PC-9 (cell line): ENCODE measurements at regions of chr6 and their contacts with region 1.

Region 1: GRCh38 chr6:43769526-43770416 is at the start of gene VEGFA:
- DNase-seq: peak; percentile 76 to 85
- H3K4me3 ChIP-seq: peak within 1 kb of the TSS; percentile 90
- H3K27ac ChIP-seq: peak within 1 kb of the TSS; percentile 94
- H3K4me1 ChIP-seq: peaks cover 12% of the 10 kb centered on the region
- H3K27me3 ChIP-seq: no peaks in the 10 kb centered on the region
- CTCF ChIP-seq: peak; percentile 99
- total RNA-seq, gene VEGFA: 112 and 117 TPM in 2 replicates

Region 2: GRCh38 chr6:42260972-42261371 is 1508.8 kb before region 1 on chr6:
- CTCF ChIA-PET with region 1: no interaction called
- POLR2A ChIA-PET with region 1: no interaction called
- intact Hi-C with region 1: no loop called
- DNase-seq: no peak
- H3K4me3 ChIP-seq: no peak overlapping the region
- H3K27ac ChIP-seq: no peak overlapping the region
- H3K4me1 ChIP-seq: no peaks in the 10 kb centered on the region
- H3K27me3 ChIP-seq: no peaks in the 10 kb centered on the region
- CTCF ChIP-seq: peak; percentile 65

Region 3: DNA sequence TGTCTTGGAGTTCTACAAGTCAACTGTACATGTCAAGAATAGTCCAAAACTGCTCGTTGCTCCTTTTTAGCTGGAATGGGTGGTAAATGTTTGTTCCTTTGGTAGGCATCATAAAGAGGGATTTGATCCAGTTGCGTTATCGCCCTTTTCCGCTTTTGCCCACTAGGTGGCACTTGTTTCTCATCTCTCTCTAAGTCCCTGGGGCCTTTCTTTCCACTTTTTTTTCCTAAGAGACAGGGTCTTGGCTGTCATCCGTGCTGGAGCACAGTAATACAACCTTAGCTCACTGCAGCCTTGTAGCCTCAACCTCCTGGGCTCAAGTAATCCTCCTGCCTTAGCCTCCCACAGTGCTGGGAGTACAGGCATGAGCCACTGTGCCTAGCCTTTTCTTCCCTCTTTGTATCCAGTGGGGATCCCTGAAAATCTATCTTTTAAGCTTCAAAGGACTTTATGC is 161.4 kb before region 1 on chr6:
- CTCF ChIA-PET with region 1: no interaction called
- POLR2A ChIA-PET with region 1: no interaction called
- intact Hi-C with region 1: loop called (anchors 2 kb)
- DNase-seq: peak; percentile 60 to 63
- H3K4me3 ChIP-seq: no peak overlapping the region
- H3K27ac ChIP-seq: no peak overlapping the region
- H3K4me1 ChIP-seq: no peaks in the 10 kb centered on the region
- H3K27me3 ChIP-seq: no peaks in the 10 kb centered on the region
- CTCF ChIP-seq: peak; percentile 85

Region 4: GRCh38 chr6:43629505-43630300 is 140.1 kb before region 1 on chr6:
- CTCF ChIA-PET with region 1: interaction called, 5 read pairs
- POLR2A ChIA-PET with region 1: interaction called, 8 read pairs
- intact Hi-C with region 1: loop called (anchors 2 kb)
- DNase-seq: peak; percentile 96 to 97
- H3K4me3 ChIP-seq: peak overlapping the region; percentile 93
- H3K27ac ChIP-seq: peak overlapping the region; percentile 97
- H3K4me1 ChIP-seq: peaks cover 34% of the 10 kb centered on the region
- H3K27me3 ChIP-seq: no peaks in the 10 kb centered on the region
- CTCF ChIP-seq: no peak

Region 5: DNA sequence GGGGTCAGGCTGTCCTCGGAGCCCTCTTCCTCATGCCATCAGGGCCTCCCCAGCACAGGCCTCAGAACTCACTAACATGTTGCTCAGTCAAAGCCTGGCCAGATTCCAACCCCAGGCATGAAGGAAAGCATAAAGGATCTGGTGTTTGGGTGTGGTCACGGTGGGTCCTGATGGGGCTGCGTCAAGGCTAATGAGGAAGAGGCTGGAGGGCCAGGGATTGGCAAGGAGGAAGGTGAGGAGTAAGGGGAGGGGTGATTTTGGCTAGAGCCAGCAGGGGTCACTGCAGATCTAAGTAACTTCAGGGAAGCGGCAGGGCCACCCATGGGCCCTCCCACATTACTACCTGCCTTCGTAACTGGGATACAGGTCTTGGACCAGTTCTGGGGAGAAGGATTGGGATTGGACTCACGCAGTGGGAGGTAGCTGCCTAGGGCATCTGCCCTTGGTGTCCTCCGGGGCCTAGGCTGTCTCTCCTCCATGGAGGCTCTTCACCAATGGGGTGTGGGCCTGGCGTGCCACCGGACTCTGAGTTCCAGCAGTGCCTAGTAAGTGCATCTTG is 46.0 kb before region 1 on chr6:
- CTCF ChIA-PET with region 1: interaction called, 8 read pairs
- POLR2A ChIA-PET with region 1: interaction called, 7 read pairs
- intact Hi-C with region 1: loop called (anchors 1 kb)
- DNase-seq: peak; percentile 69 to 74
- H3K4me3 ChIP-seq: no peak overlapping the region
- H3K27ac ChIP-seq: no peak overlapping the region
- H3K4me1 ChIP-seq: peaks cover 28% of the 10 kb centered on the region
- H3K27me3 ChIP-seq: no peaks in the 10 kb centered on the region
- CTCF ChIP-seq: peak; percentile 83

Region 6: GRCh38 chr6:43851204-43851865 is 81.6 kb after region 1 on chr6:
- CTCF ChIA-PET with region 1: interaction called, 3 read pairs
- POLR2A ChIA-PET with region 1: no interaction called
- intact Hi-C with region 1: loop called (anchors 5 kb)
- DNase-seq: peak; percentile 56 to 65
- H3K4me3 ChIP-seq: no peak overlapping the region
- H3K27ac ChIP-seq: no peak overlapping the region
- H3K4me1 ChIP-seq: peaks cover 44% of the 10 kb centered on the region
- H3K27me3 ChIP-seq: no peaks in the 10 kb centered on the region
- CTCF ChIP-seq: no peak

Region 7: GRCh38 chr6:43951063-43951755 is 181.4 kb after region 1 on chr6:
- CTCF ChIA-PET with region 1: interaction called, 4 read pairs
- POLR2A ChIA-PET with region 1: no interaction called
- intact Hi-C with region 1: loop called (anchors 2 kb)
- DNase-seq: peak; percentile 44 to 62
- H3K4me3 ChIP-seq: no peak overlapping the region
- H3K27ac ChIP-seq: no peak overlapping the region
- H3K4me1 ChIP-seq: peaks cover 21% of the 10 kb centered on the region
- H3K27me3 ChIP-seq: no peaks in the 10 kb centered on the region
- CTCF ChIP-seq: peak; percentile 63

Region 8: GRCh38 chr6:44161997-44162338 is 392.2 kb after region 1 on chr6:
- CTCF ChIA-PET with region 1: no interaction called
- POLR2A ChIA-PET with region 1: no interaction called
- intact Hi-C with region 1: no loop called
- DNase-seq: no peak
- H3K4me3 ChIP-seq: no peak overlapping the region
- H3K27ac ChIP-seq: no peak overlapping the region
- H3K4me1 ChIP-seq: peaks cover 6% of the 10 kb centered on the region; the same call in 1 of the 2 replicates
- H3K27me3 ChIP-seq: peaks cover 4% of the 10 kb centered on the region
- CTCF ChIP-seq: no peak

Region 9: DNA sequence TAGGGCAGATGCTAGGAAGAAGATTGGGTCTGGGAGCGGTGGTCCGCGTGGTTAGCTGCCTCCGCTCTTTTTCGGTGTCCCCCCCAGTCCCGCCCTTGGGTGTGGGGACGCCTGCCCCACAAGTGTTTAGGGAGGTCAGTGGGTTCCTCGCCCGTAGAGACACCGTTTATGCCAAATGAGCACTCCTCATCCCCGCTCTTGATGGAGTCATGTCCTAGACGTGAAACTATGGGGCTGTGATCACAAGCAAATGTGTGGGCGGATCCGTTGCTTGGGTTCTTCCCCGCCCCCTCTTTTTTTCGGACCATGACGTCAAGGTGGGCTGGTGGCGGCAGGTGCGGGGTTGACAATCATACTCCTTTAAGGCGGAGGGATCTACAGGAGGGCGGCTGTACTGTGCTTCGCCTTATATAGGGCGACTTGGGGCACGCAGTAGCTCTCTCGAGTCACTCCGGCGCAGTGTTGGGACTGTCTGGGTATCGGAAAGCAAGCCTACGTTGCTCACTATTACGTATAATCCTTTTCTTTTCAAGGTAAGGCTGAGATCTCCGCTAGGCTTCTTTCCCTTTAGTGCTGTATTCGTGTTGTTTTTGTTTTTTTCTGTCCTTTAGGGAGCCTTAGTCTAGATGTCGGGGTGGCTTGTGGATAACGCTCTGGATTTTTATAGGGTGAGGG is 477.0 kb after region 1 on chr6 and contains the start of gene HSP90AB1:
- CTCF ChIA-PET with region 1: interaction called, 23 read pairs
- POLR2A ChIA-PET with region 1: no interaction called
- intact Hi-C with region 1: no loop called
- DNase-seq: peak; percentile 94 to 97
- H3K4me3 ChIP-seq: peak within 1 kb of the TSS; percentile 98
- H3K27ac ChIP-seq: peak within 1 kb of the TSS; percentile 94
- H3K4me1 ChIP-seq: peaks cover 35% of the 10 kb centered on the region
- H3K27me3 ChIP-seq: no peaks in the 10 kb centered on the region
- CTCF ChIP-seq: no peak
- total RNA-seq, gene HSP90AB1: 895 and 1,136 TPM in 2 replicates